Cardiac septum (tissue), 1 donor: ENCODE measurements at regions of chr5 and their contacts with region 1.

Region 1: GRCh38 chr5:137565444-137565843 is 66.3 kb upstream of the SPOCK1 start:
- DNase-seq: no peak

Region 2: GRCh38 chr5:137619191-137619870 is 53.9 kb after region 1 on chr5:
- intact Hi-C with region 1: loop called (anchors 5 kb)
- DNase-seq: peak; percentile 87